Lower leg skin (tissue), 4 donors: ENCODE measurements at regions of chr6 and their contacts with region 1.

Region 1: DNA sequence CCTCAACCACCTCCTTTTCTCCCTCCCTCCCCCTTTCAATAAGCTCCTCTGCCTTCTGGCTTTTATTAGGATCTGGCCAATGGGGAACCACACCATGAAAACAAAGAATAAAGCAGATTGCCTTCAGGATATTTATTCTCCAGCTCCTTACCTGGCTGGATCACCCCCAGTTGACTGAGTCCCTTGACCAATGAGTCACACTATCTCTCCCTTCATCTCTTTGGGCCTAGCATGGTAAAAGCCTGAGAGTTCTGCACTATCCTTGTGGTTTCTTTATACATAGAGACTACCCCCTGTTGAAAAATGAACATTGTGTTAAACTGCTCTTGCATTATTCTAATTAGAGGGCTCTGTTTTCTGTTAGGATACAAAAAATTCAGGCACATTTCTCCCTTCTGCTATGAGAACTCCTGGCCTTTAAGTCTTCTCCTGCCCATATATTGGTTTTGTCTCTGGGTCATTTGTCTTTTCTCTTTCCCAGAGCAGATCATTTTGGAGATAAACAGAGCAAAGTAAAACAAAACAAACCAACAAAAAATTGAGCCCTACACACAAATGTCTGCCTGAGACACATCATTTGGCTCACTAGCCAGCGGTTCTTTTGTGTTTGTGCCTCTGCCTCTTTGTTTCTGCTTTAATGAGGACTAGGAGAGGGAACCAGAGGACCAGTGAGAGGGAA is 476.6 kb downstream of the EPHA7 start:
- DNase-seq: no peak
- H3K4me3 ChIP-seq: no peak overlapping the region
- CTCF ChIP-seq: no peak
- POLR2A ChIP-seq: no peak

Region 2: DNA sequence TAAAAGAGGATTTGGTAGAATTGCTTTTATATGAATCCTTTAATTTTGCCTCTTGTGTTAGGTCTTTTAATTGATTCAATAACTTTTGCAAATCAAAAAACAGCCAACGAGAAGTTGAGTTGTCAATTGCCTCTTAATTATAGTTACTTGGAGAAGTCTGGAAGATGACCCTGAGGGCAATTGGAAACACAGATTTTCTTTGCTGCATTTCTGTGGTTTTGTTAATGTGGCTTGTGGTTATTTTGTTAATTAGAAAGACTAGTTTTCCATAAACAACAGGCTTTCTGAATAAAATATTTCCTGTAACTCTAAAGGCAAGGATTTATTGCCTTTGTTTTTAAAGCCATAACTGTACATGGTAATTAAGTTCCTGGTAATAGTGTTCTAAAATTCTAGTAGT is 36.3 kb before region 1 on chr6:
- intact Hi-C with region 1: loop called (anchors 2 kb)
- DNase-seq: no peak
- H3K4me3 ChIP-seq: no peak overlapping the region
- CTCF ChIP-seq: no peak
- POLR2A ChIP-seq: no peak